Heart right ventricle (tissue), 16 donors: ENCODE measurements at regions of chr12 and their contacts with region 1.

Region 1: GRCh38 chr12:56987551-56988053 is 18.7 kb downstream of the ZBTB39 start:
- DNase-seq: peak; percentile 75 to 81
- ATAC-seq: peak; percentile 72 to 92 (median 84)
- H3K4me3 ChIP-seq: peak overlapping the region in 2 of 10 donors; percentile 6 to 20
- H3K27ac ChIP-seq: peak overlapping the region in 4 of 10 donors; percentile 40 to 65 (median 43)
- H3K4me1 ChIP-seq: peaks cover 2 to 46% (median 36%) of the 10 kb centered on the region in 9 donors
- H3K27me3 ChIP-seq: no peaks in the 10 kb centered on the region
- CTCF ChIP-seq: peak; percentile 81 to 94 (median 91)

Region 2: DNA sequence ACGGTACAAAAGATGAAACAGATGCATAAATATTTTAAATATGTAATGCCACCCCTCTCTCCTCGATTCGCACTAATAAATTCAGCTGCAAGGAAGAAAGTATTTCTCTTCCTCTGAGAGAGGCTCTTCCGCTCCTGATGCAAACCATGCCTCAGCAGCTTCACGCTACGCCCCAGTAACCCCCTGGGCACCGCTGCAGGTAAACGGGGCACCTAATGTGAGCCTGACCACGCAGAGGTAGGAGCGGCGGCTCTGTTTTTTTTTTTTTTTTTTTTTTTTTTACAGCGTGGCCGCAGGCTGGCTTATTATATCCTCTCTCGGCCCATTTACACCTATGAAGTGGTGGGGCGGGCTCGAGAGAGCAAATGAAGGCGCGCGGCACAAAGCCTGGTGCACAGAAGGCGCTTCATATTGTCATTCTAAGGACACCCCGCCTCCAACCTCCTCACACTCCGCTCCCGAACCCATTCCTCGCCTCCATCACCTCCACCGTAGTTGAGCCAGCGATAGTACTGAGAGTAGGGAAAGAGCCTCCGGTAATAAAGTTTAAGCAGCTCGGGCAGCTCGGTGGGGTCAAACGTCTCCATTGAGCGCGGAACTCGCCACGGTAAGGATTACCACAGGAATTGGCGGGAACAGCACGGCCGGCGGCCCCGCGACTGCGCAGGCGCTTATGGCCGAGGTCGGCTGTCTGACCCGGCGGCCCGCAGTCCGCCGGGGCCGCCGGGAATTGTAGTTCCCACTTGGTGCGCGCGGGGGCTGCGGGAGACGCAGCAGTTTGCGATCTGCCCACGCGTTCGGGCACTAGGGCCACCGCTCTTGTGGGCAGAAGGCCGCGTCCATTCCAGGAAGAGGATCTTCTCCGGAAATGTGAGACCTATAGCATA is 235.6 kb before region 1 on chr12 and contains the start of gene PRIM1:
- intact Hi-C with region 1: loop called in 4 of 10 experiments (anchors 1 to 5 kb)
- DNase-seq: peak; percentile 76 to 88
- ATAC-seq: peak; percentile 95 to 98 (median 98)
- H3K4me3 ChIP-seq: peak within 1 kb of the TSS; percentile 63 to 80 (median 72)
- H3K27ac ChIP-seq: peak within 1 kb of the TSS in 9 of 10 donors; percentile 22 to 66 (median 43)
- H3K4me1 ChIP-seq: peaks cover 0 to 33% (median 9%) of the 10 kb centered on the region in 9 donors
- H3K27me3 ChIP-seq: no peaks in the 10 kb centered on the region
- CTCF ChIP-seq: peak in 4 of 9 donors; percentile 24 to 44 (median 28)
- total RNA-seq, gene PRIM1: 1.8 to 4.7 (median 3.2) TPM

Region 3: DNA sequence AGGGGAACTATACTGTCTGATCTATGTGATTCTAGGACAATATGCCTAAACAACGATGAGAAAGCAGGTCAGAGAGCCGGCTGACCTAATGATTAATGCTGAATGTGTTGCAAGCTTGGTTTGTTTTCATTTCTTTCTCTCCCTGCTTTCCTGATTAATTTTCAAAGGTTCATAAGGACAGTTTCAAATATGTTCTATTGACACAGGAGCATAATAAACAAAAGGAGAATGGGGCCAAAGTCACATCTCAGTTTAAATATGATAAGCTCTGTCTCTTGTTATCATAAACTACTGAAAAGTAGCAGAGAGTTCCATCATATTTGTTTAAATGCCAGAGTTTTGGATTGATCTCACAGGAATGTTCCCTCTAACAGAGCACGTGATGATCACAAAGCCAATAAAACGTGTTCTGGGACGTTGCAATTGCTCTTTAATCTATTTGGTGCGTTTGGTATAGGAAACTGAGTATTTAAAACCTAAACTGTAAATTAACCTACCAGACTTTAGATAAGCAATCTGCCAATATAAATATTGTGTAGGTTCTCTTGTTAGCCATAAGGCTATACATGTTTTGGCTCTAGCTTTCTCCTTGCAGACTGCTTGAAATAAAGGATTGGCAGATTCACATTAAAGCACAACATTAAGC is 228.2 kb before region 1 on chr12:
- intact Hi-C with region 1: loop called (anchors 1 to 5 kb)
- DNase-seq: no peak
- ATAC-seq: no peak
- H3K4me3 ChIP-seq: no peak overlapping the region
- H3K27ac ChIP-seq: no peak overlapping the region
- H3K4me1 ChIP-seq: no peaks in the 10 kb centered on the region
- H3K27me3 ChIP-seq: no peaks in the 10 kb centered on the region
- CTCF ChIP-seq: no peak

Region 4: DNA sequence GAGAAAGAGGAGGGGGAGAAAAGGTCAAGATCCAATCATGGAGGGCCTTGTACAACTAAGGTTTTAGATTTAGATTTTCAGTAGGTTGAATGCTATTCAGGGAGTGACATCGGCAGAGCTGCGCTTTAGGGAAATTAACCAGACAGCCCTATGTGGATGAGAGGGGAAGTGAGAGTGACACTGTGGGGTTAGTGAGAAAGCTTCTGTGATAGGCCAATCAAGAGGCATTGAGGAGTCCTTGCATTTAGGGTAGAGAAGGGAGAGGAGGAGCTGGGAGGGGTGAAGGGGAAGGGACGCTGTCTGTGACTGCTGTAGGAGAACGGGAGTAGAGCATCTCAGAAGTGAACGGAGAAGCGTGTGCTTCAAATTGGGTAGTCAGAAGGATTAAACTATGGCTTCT is 221.1 kb before region 1 on chr12:
- intact Hi-C with region 1: loop called in 6 of 10 experiments (anchors 1 to 5 kb)
- DNase-seq: no peak
- ATAC-seq: peak in 2 of 8 donors; percentile 39 to 74
- H3K4me3 ChIP-seq: no peak overlapping the region
- H3K27ac ChIP-seq: no peak overlapping the region
- H3K4me1 ChIP-seq: no peaks in the 10 kb centered on the region
- H3K27me3 ChIP-seq: no peaks in the 10 kb centered on the region
- CTCF ChIP-seq: no peak

Region 5: GRCh38 chr12:56839915-56840325 is 147.7 kb before region 1 on chr12:
- intact Hi-C with region 1: loop called in 4 of 10 experiments (anchors 5 to 10 kb)
- DNase-seq: peak; percentile 29 to 38
- ATAC-seq: peak in 5 of 8 donors; percentile 41 to 58 (median 52)
- H3K4me3 ChIP-seq: no peak overlapping the region
- H3K27ac ChIP-seq: peak overlapping the region in 1 of 10 donors; percentile 54
- H3K4me1 ChIP-seq: peaks cover 0 to 34% (median 17%) of the 10 kb centered on the region in 9 donors
- H3K27me3 ChIP-seq: no peaks in the 10 kb centered on the region
- CTCF ChIP-seq: peak in 7 of 9 donors; percentile 35 to 61 (median 50)